GM12878 (cell line): ENCODE measurements at regions of chr1 and their contacts with region 1.

Region 1: DNA sequence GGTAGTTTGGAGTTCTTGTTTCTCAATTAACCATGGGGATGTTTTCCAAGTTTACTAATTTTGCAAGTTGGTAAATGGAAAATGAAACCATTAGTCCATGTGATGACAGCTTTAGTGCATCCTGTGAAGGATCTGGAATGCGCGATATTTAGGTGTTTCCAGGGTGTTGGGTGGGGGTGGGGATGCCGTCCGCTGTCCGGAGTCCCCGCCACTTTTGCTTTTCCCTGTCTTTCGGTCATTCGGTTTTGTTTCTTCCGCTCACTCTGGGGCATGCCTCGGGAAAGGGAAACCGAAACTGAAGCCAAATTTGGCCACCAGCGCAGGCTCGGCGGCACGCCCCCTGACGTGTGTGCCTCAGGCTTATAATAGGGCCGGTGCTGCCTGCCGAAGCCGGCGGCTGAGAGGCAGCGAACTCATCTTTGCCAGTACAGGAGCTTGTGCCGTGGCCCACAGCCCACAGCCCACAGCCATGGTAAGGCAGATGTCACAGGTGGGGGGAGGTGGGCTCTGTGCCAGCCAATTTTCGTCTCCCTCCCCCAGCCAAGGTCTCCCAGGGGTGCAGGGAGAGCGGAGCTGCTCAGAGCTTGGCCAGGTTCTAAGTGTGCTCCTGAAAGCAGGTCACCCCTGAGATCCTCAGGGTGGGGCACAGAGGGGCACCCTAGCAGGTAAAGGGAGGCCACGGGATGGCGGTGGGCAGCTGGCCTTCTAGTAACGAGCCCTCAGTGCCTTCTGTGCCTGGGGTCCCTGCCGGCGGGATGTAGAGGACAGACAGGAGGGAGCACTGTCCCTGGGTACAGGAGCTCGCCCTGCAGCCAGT is at the start of gene ISG15:
- DNase-seq: peak; percentile 79
- ATAC-seq: peak; percentile 91
- H3K4me3 ChIP-seq: peak within 1 kb of the TSS; percentile 90
- H3K27ac ChIP-seq: peak within 1 kb of the TSS; percentile 92
- H3K4me1 ChIP-seq: peaks cover 12% of the 10 kb centered on the region
- H3K27me3 ChIP-seq: no peaks in the 10 kb centered on the region
- CTCF ChIP-seq: no peak
- EP300 ChIP-seq: peak in 1 of 2 experiments; percentile 39; a peak in 1 of 4 replicates
- POLR2A ChIP-seq: peak; percentile 81
- RAD21 ChIP-seq: no peak
- polyA plus RNA-seq, gene ISG15: 68.9 to 126 TPM

Region 2: GRCh38 chr1:993379-993995 is 19.8 kb before region 1 on chr1:
- CTCF ChIA-PET with region 1: interaction called, 5 read pairs
- POLR2A ChIA-PET with region 1: interaction called, 11 read pairs
- RAD21 ChIA-PET with region 1: interaction called, 7 read pairs
- SMC1A ChIA-PET with region 1: interaction called, 4 read pairs
- in situ Hi-C with region 1: no loop called
- intact Hi-C with region 1: no loop called
- DNase-seq: no peak
- ATAC-seq: no peak
- H3K4me3 ChIP-seq: no peak overlapping the region
- H3K27ac ChIP-seq: no peak overlapping the region
- H3K4me1 ChIP-seq: peaks cover 20% of the 10 kb centered on the region
- H3K27me3 ChIP-seq: peaks cover 0 to 6% of the 10 kb centered on the region in 2 experiments; a peak in 1 of 4 replicates
- CTCF ChIP-seq: no peak
- EP300 ChIP-seq: no peak
- POLR2A ChIP-seq: no peak
- RAD21 ChIP-seq: no peak

Region 3: GRCh38 chr1:999725-1000356 is 13.5 kb before region 1 on chr1 and contains the start of gene HES4:
- CTCF ChIA-PET with region 1: interaction called, 37 read pairs
- POLR2A ChIA-PET with region 1: interaction called, 22 read pairs
- RAD21 ChIA-PET with region 1: interaction called, 7 read pairs
- SMC1A ChIA-PET with region 1: interaction called, 11 read pairs
- in situ Hi-C with region 1: no loop called
- intact Hi-C with region 1: no loop called
- DNase-seq: no peak
- ATAC-seq: peak; percentile 59
- H3K4me3 ChIP-seq: peak within 1 kb of the TSS; percentile 66
- H3K27ac ChIP-seq: no peak within 1 kb of the TSS
- H3K4me1 ChIP-seq: peaks cover 19% of the 10 kb centered on the region
- H3K27me3 ChIP-seq: peaks cover 0 to 20% of the 10 kb centered on the region in 2 experiments; a peak in 2 of 4 replicates
- CTCF ChIP-seq: no peak
- EP300 ChIP-seq: no peak
- POLR2A ChIP-seq: 0 out of 2 replicates have a peak, but pooled peaks have one; percentile 16
- RAD21 ChIP-seq: no peak
- polyA plus RNA-seq, gene HES4: not detected

Region 4: DNA sequence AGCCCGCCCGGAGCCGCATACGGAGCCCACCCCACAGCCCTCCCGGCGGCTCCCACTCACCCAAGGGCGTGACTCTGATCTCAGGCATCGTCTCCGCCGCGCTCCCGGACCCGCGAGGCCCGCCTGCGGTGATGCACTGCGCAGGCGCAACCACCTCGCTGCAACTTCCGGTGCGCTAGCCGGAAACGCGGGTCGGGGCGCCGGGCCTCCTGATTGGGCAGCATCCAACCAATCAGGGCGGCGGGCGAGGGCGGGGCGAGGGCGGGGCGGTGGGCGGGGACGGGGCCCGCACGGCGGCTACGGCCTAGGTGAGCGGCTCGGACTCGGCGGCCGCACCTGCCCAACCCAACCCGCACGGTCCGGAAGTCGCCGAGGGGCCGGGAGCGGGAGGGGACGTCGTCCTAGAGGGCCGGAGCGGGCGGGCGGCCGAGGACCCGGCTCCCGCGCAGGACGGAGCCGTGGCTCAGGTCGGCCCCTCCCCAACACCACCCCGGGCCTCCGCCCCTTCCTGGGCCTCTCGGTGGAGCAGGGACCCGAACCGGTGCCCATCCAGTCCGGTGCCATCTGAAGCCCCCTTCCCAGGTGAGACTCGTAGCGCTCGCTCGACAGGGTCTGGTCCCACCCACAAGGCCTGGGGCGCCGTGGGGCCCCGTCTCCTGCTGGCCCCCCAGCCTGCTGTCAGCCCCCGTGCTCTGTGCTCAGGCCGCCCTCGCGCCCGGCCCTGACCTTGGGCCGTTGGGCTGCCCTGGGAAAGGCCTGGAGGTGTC is 311.4 kb after region 1 on chr1 and contains the starts of genes CPTP and INTS11:
- CTCF ChIA-PET with region 1: no interaction called
- POLR2A ChIA-PET with region 1: no interaction called
- RAD21 ChIA-PET with region 1: no interaction called
- SMC1A ChIA-PET with region 1: no interaction called
- in situ Hi-C with region 1: no loop called
- intact Hi-C with region 1: no loop called
- DNase-seq: peak; percentile 61
- ATAC-seq: peak; percentile 92
- H3K4me3 ChIP-seq: peak within 1 kb of the TSS; percentile 88
- H3K27ac ChIP-seq: peak within 1 kb of the TSS; percentile 82
- H3K4me1 ChIP-seq: peaks cover 10% of the 10 kb centered on the region
- H3K27me3 ChIP-seq: no peaks in the 10 kb centered on the region
- CTCF ChIP-seq: no peak
- EP300 ChIP-seq: no peak
- POLR2A ChIP-seq: peak; percentile 92
- RAD21 ChIP-seq: no peak
- polyA plus RNA-seq, gene CPTP: 0.06 to 0.18 TPM
- polyA plus RNA-seq, gene INTS11: 2.5 to 9.4 TPM